Activated naive CD4-positive, alpha-beta T cell treated with anti-CD3 and anti-CD28 coated beads for 36 hours (primary cell): ENCODE measurements at regions of chr5 and their contacts with region 1.

Region 1: DNA sequence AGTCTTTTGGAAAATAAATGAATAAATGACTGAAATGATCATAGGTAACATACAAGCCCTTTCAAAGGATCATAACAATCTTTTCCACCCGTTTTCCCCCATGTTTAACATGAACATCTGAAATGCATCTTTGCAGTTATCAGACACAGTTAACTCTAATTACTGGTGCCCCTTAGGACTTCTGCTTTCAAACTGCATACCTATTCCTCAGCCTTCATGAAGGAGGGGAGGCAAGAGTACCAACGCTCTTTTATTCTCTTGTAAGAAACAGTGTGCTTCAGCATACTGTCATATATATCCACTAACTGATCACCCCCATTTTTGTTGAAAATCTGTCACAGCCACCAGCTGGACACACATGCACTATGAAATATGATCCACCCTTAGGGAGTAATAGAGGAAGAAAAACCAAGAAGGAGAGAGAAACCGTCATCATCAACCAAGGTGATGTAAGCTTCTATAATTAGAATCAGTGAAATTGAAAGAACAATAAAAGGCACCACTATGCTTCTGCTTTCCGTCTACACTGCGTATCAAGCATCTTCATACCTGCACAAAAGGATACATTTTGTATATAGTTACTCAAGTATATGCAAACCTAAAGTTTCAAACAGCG is 98.7 kb downstream of the RAPGEF6 start:
- DNase-seq: peak; percentile 39
- H3K4me3 Mint-ChIP-seq: peak overlapping the region; percentile 49
- H3K27ac Mint-ChIP-seq: peak overlapping the region; percentile 80
- H3K4me1 Mint-ChIP-seq: peaks cover 81% of the 10 kb centered on the region
- H3K27me3 Mint-ChIP-seq: no peaks in the 10 kb centered on the region

Region 2: DNA sequence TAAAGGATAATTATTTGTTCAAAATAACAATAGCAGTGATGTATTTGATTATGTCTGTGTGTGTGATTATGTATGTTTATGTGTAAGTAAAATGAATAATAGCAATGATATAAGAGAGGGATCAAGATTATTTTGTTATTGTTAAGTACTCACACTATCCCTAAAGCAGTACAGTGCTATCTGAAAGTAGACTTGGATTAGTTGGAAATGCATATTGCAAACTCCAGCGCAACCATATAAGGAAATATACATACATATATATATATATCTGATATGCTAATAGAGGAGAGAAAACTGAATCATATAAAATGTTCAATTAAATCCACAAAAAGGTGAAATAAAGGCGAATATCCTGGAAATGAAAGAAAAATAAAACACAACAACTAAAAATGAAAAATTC is 639.7 kb before region 1 on chr5:
- CTCF ChIA-PET with region 1: no interaction called
- intact Hi-C with region 1: no loop called
- DNase-seq: no peak
- H3K4me3 Mint-ChIP-seq: no peak overlapping the region
- H3K27ac Mint-ChIP-seq: no peak overlapping the region
- H3K4me1 Mint-ChIP-seq: no peaks in the 10 kb centered on the region
- H3K27me3 Mint-ChIP-seq: peaks cover 3% of the 10 kb centered on the region

Region 3: GRCh38 chr5:131209506-131210150 is 326.7 kb before region 1 on chr5:
- CTCF ChIA-PET with region 1: no interaction called
- intact Hi-C with region 1: loop called (anchors 5 kb)
- DNase-seq: peak; percentile 77
- H3K4me3 Mint-ChIP-seq: peak overlapping the region; percentile 69
- H3K27ac Mint-ChIP-seq: peak overlapping the region; percentile 96
- H3K4me1 Mint-ChIP-seq: peaks cover 57% of the 10 kb centered on the region
- H3K27me3 Mint-ChIP-seq: no peaks in the 10 kb centered on the region

Region 4: DNA sequence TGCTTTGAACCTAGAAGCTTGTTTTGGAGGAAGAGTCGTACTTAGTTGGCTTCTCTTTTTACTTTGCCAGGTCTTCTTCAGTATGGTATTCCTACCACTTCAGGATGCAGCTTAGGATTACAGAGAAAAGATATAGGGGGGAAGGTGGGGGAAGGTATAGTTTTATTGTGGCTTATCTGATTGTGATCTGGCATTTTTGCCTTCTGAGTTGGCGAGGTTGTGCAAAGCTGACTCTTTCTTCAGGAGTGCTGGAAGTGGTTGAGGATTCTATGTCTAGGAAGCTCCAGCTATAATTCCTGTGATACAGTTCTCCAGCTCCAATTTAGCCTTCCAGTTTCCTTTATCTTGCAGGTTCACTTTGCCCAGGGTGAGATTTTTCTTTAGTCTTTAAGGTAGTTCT is 265.5 kb before region 1 on chr5:
- CTCF ChIA-PET with region 1: no interaction called
- intact Hi-C with region 1: loop called (anchors 5 kb)
- DNase-seq: no peak
- H3K4me3 Mint-ChIP-seq: peak overlapping the region; percentile 50
- H3K27ac Mint-ChIP-seq: peak overlapping the region; percentile 97
- H3K4me1 Mint-ChIP-seq: peaks cover 75% of the 10 kb centered on the region
- H3K27me3 Mint-ChIP-seq: no peaks in the 10 kb centered on the region

Region 5: GRCh38 chr5:131488463-131488862 is 47.9 kb before region 1 on chr5:
- CTCF ChIA-PET with region 1: interaction called, 3 read pairs
- intact Hi-C with region 1: loop called (anchors 2 kb)
- DNase-seq: no peak
- H3K4me3 Mint-ChIP-seq: no peak overlapping the region
- H3K27ac Mint-ChIP-seq: peak overlapping the region; percentile 65
- H3K4me1 Mint-ChIP-seq: peaks cover 49% of the 10 kb centered on the region
- H3K27me3 Mint-ChIP-seq: no peaks in the 10 kb centered on the region

Region 6: DNA sequence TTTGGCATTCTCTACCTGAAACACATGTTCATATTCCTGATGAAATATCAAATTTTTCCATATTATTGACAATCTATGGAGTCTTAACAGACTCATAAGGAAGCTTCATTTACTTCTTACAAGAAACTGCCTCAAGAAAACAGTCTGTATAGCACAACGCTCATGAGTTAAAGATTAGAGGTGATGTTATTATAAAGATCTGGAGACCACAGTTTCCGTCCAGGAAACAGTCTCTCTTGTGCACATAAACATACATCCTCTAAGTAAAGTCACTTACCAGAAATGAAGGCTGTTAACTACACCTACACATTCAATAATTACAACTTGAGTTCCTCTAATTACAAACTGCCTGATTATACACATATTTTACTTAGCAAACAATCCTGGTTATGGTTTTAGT is 11.9 kb after region 1 on chr5:
- CTCF ChIA-PET with region 1: interaction called, 4 read pairs
- intact Hi-C with region 1: loop called (anchors 1 kb)
- DNase-seq: no peak
- H3K4me3 Mint-ChIP-seq: peak overlapping the region; percentile 89
- H3K27ac Mint-ChIP-seq: peak overlapping the region; percentile 99
- H3K4me1 Mint-ChIP-seq: peaks cover 72% of the 10 kb centered on the region
- H3K27me3 Mint-ChIP-seq: no peaks in the 10 kb centered on the region

Region 7: GRCh38 chr5:131747180-131748105 is 211.1 kb after region 1 on chr5:
- CTCF ChIA-PET with region 1: no interaction called
- intact Hi-C with region 1: loop called (anchors 1 kb)
- DNase-seq: no peak
- H3K4me3 Mint-ChIP-seq: peak overlapping the region; percentile 49
- H3K27ac Mint-ChIP-seq: peak overlapping the region; percentile 85
- H3K4me1 Mint-ChIP-seq: peaks cover 37% of the 10 kb centered on the region
- H3K27me3 Mint-ChIP-seq: no peaks in the 10 kb centered on the region

Region 8: GRCh38 chr5:132410451-132411381 is 874.4 kb after region 1 on chr5:
- CTCF ChIA-PET with region 1: no interaction called
- intact Hi-C with region 1: loop called (anchors 10 kb)
- DNase-seq: peak; percentile 87
- H3K4me3 Mint-ChIP-seq: peak overlapping the region; percentile 90
- H3K27ac Mint-ChIP-seq: peak overlapping the region; percentile 99
- H3K4me1 Mint-ChIP-seq: peaks cover 68% of the 10 kb centered on the region
- H3K27me3 Mint-ChIP-seq: no peaks in the 10 kb centered on the region